Naive thymus-derived CD8-positive, alpha-beta T cell (primary cell): ENCODE measurements at regions of chr19 and their contacts with region 1.

Region 1: DNA sequence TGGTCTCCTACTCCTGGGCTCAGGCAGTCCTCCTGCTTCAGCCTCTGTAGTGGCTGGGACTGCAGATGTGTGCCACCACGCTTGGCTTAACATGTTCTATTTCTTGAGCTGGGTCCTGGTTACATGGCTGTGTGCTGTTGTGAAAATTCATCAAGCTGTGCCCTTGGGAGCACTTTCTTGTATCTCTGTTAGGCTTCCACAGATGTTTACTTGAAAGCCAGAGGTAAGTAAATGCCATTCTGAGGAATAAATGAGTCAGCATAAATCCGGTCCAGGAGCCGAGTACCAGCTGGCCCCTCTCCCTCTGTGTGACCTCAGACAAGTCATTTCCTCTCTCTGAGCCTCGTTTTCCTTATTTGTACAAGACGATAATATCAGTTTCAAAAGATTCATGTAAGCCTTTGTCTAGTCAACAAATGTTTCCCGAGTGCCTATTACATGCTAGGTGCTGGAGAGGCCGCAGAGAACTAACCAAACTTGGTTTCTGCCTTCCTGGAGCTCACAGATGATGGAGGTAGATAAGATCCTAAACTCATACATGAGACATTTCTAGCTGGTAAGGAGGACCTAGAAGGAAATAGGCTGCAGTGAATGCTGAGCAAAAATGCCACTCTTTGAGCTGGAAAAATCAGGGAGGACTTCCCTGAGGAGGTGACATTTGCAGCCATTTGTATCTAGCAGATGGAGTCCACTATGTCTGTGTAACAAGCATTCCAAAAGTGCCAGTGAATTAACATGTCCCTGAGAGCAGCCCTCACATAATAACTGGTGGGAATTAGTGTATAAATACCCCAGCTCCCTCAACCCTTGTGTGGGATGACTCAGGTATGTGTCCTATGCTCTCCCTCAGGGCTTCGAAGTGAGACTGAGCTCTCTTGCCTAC is 2.7 kb upstream of the RASAL3 start:
- DNase-seq: peak in 2 of 10 donors; percentile 27 to 31
- ATAC-seq: peak in 1 of 2 donors; percentile 16
- H3K4me3 Mint-ChIP-seq: peak overlapping the region in 9 of 10 donors; percentile 61 to 85 (median 71)
- H3K27ac Mint-ChIP-seq: peak overlapping the region; percentile 55 to 94 (median 90)
- H3K4me1 Mint-ChIP-seq: peaks cover 36 to 74% (median 67%) of the 10 kb centered on the region in 4 donors
- H3K27me3 Mint-ChIP-seq: no peaks in the 10 kb centered on the region

Region 2: GRCh38 chr19:15432629-15433518 is 34.2 kb before region 1 on chr19:
- POLR2A ChIA-PET with region 1: interaction called, 38 read pairs
- DNase-seq: peak; percentile 83 to 94 (median 90)
- ATAC-seq: peak; percentile 89 to 94
- H3K4me3 Mint-ChIP-seq: peak overlapping the region; percentile 88 to 99 (median 94)
- H3K27ac Mint-ChIP-seq: peak overlapping the region; percentile 84 to 99 (median 95)
- H3K4me1 Mint-ChIP-seq: peaks cover 19 to 34% (median 29%) of the 10 kb centered on the region in 4 donors
- H3K27me3 Mint-ChIP-seq: no peaks in the 10 kb centered on the region

Region 3: DNA sequence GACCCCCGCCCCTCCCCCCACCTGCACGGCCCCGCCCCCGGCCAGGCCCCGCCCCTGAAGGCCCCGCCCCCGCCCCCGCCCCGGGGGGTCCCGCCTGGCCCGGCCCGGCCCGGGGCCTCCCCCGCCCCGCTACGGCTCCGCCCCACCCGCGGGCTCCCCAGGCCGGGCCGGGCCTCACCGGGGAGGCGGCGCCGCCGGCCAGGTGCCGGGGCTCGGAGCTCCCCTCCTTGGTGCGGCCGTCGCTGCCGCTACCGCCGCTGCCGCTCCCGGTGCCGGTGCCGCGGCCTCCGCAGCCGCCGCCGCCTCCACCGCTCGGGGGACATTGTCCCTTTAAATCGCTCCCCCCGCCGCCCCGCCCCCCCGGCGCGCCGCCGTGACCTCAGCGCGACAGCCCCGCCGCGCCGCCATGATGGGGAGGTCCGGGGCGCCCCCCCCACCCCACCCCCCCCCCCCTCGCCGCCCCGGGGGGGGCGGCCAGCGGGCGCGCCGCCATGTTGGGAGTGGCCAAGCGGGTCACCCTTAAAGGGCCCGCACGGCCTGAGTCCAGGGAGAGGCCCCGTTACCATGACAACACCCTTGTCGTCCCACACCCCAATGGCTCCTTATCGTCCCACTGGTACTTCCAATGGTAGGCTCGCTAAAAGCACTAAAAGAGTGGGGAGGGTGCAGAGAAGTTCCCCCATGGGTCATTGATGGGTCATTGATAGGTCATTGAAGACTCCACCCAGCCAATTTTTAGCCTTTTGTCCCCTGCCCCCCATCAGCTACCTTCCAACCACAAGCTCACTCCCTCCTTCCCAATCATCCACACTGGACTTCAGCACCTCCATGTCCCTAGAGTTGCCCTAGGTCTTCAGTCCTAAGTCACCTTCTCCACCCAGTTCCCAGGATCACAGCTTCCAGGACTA is 17.2 kb before region 1 on chr19 and contains the start of gene WIZ:
- POLR2A ChIA-PET with region 1: interaction called, 48 read pairs
- DNase-seq: peak; percentile 78 to 92 (median 85)
- ATAC-seq: peak; percentile 80 to 85
- H3K4me3 Mint-ChIP-seq: peak within 1 kb of the TSS; percentile 71 to 90 (median 84)
- H3K27ac Mint-ChIP-seq: peak within 1 kb of the TSS; percentile 83 to 97 (median 94)
- H3K4me1 Mint-ChIP-seq: peaks cover 20 to 44% (median 30%) of the 10 kb centered on the region in 4 donors
- H3K27me3 Mint-ChIP-seq: no peaks in the 10 kb centered on the region
- polyA plus RNA-seq, gene WIZ: 0.57 to 2.0 (median 0.75) TPM

Region 4: GRCh38 chr19:15479391-15480345 is 12.6 kb after region 1 on chr19 and contains the start of gene PGLYRP2:
- POLR2A ChIA-PET with region 1: interaction called, 17 read pairs
- DNase-seq: peak in 3 of 10 donors; percentile 14 to 23 (median 21)
- ATAC-seq: peak; percentile 49 to 69
- H3K4me3 Mint-ChIP-seq: peak within 1 kb of the TSS in 6 of 10 donors; percentile 2 to 53 (median 33)
- H3K27ac Mint-ChIP-seq: peak within 1 kb of the TSS in 7 of 10 donors; percentile 48 to 78 (median 55)
- H3K4me1 Mint-ChIP-seq: peaks cover 21 to 48% (median 30%) of the 10 kb centered on the region in 4 donors
- H3K27me3 Mint-ChIP-seq: no peaks in the 10 kb centered on the region
- polyA plus RNA-seq, gene PGLYRP2: 0.37 to 0.72 (median 0.42) TPM

Region 5: DNA sequence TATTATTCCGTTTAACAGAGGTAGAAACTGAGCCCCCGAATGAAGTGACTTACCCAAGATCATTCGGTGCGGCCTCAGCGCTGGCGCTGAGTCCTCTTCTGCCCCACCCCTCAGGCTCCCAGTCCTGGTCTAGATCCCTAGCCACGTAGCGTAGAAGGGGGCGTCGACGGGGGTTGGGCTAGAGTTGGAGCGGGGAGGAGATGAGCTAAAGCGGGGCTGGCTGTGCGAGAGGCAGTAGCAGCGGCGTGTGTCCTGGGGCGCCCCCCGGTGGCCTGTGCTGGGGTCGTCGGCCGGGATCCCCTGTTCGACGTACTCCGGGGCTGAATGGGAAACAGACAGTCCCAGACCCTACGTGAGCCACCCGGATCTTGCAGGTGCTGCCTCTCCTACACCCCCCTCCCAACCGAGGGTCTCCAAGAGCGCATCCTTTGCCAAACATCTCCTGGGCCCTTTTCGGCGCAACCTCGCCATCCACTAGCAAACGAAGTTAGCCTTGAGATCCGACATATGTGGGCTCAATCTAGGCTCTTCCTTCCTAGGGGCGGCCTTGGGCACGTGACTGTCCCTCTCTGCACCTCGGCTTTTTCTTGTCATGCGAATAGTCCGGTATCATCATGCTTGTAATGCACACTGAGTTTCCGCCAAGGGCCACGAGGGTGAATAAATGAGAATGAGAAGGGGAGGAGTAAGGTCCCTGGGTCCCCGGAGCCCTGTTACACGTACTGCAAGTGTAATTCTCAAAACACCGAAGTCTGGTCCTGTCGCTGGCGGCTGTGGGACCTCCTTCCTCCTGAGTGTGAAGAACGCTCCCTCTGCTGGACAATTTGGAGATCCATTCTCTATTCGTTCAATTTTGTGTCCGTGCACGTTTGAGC is 88.9 kb after region 1 on chr19:
- POLR2A ChIA-PET with region 1: interaction called, 69 read pairs
- DNase-seq: peak; percentile 92 to 98 (median 96)
- ATAC-seq: peak; percentile 86
- H3K4me3 Mint-ChIP-seq: peak overlapping the region; percentile 77 to 92 (median 86)
- H3K27ac Mint-ChIP-seq: peak overlapping the region; percentile 80 to 98 (median 91)
- H3K4me1 Mint-ChIP-seq: peaks cover 13 to 29% (median 17%) of the 10 kb centered on the region in 4 donors
- H3K27me3 Mint-ChIP-seq: peaks cover 0 to 2% (median 0%) of the 10 kb centered on the region in 5 donors